ENCODE measurements at regions of chr6 and their contacts with region 1.

Region 1: GRCh38 chr6:30396833-30397479 is 52.0 kb downstream of the RPP21 start:
- DNase-seq: peak; percentile 88
- ATAC-seq: peak; percentile 100
- H3K4me3 ChIP-seq: no peak overlapping the region
- H3K4me3 Mint-ChIP-seq: no peak overlapping the region
- H3K27ac ChIP-seq: no peak overlapping the region
- H3K27ac Mint-ChIP-seq: no peak overlapping the region
- H3K4me1 ChIP-seq: peaks cover 10 to 13% of the 10 kb centered on the region in 2 donors
- H3K4me1 Mint-ChIP-seq: peaks cover 6% of the 10 kb centered on the region
- H3K27me3 ChIP-seq: peaks cover 0 to 39% (median 16%) of the 10 kb centered on the region in 4 experiments
- H3K27me3 Mint-ChIP-seq: peaks cover 54% of the 10 kb centered on the region
- CTCF ChIP-seq: peak; percentile 89

Region 2: GRCh38 chr6:30219244-30219643 is 177.7 kb before region 1 on chr6:
- CTCF ChIA-PET with region 1: interaction called, 20 read pairs
- POLR2A ChIA-PET with region 1: no interaction called
- intact Hi-C with region 1: loop called (anchors 1 kb)
- DNase-seq: peak; percentile 73
- ATAC-seq: no peak
- H3K4me3 ChIP-seq: no peak overlapping the region
- H3K4me3 Mint-ChIP-seq: no peak overlapping the region
- H3K27ac ChIP-seq: no peak overlapping the region
- H3K27ac Mint-ChIP-seq: no peak overlapping the region
- H3K4me1 ChIP-seq: peaks cover 7 to 16% of the 10 kb centered on the region in 2 donors
- H3K4me1 Mint-ChIP-seq: peaks cover 13% of the 10 kb centered on the region
- H3K27me3 ChIP-seq: no peaks in the 10 kb centered on the region
- H3K27me3 Mint-ChIP-seq: peaks cover 3% of the 10 kb centered on the region
- CTCF ChIP-seq: peak; percentile 73

Region 3: GRCh38 chr6:30238174-30238795 is 158.7 kb before region 1 on chr6:
- CTCF ChIA-PET with region 1: interaction called, 41 read pairs
- POLR2A ChIA-PET with region 1: no interaction called
- intact Hi-C with region 1: no loop called
- DNase-seq: peak; percentile 55
- ATAC-seq: peak; percentile 43
- H3K4me3 ChIP-seq: no peak overlapping the region
- H3K4me3 Mint-ChIP-seq: no peak overlapping the region
- H3K27ac ChIP-seq: no peak overlapping the region
- H3K27ac Mint-ChIP-seq: no peak overlapping the region
- H3K4me1 ChIP-seq: no peaks in the 10 kb centered on the region
- H3K4me1 Mint-ChIP-seq: peaks cover 1% of the 10 kb centered on the region
- H3K27me3 ChIP-seq: peaks cover 0 to 5% (median 1%) of the 10 kb centered on the region in 4 experiments
- H3K27me3 Mint-ChIP-seq: peaks cover 46% of the 10 kb centered on the region
- CTCF ChIP-seq: peak; percentile 50

Region 4: GRCh38 chr6:30357678-30358540 is 39.0 kb before region 1 on chr6:
- CTCF ChIA-PET with region 1: interaction called, 20 read pairs
- POLR2A ChIA-PET with region 1: no interaction called
- intact Hi-C with region 1: loop called (anchors 1 kb)
- DNase-seq: peak; percentile 81
- ATAC-seq: peak; percentile 82
- H3K4me3 ChIP-seq: peak overlapping the region; percentile 28 to 64 (median 51)
- H3K4me3 Mint-ChIP-seq: peak overlapping the region; percentile 93
- H3K27ac ChIP-seq: no peak overlapping the region
- H3K27ac Mint-ChIP-seq: no peak overlapping the region
- H3K4me1 ChIP-seq: peaks cover 7 to 12% of the 10 kb centered on the region in 2 donors
- H3K4me1 Mint-ChIP-seq: peaks cover 9% of the 10 kb centered on the region
- H3K27me3 ChIP-seq: peaks cover 0 to 55% (median 32%) of the 10 kb centered on the region in 4 experiments
- H3K27me3 Mint-ChIP-seq: peaks cover 51% of the 10 kb centered on the region
- CTCF ChIP-seq: peak; percentile 90

Measured in B cell (primary cell).